ENCODE measurements at regions of chr1 and their contacts with region 1.

Region 1: GRCh38 chr1:111605576-111605975 is 14.0 kb upstream of the RAP1A start:
- DNase-seq: no peak
- H3K4me3 ChIP-seq: no peak overlapping the region
- H3K27me3 ChIP-seq: no peaks in the 10 kb centered on the region
- CTCF ChIP-seq: no peak

Region 2: DNA sequence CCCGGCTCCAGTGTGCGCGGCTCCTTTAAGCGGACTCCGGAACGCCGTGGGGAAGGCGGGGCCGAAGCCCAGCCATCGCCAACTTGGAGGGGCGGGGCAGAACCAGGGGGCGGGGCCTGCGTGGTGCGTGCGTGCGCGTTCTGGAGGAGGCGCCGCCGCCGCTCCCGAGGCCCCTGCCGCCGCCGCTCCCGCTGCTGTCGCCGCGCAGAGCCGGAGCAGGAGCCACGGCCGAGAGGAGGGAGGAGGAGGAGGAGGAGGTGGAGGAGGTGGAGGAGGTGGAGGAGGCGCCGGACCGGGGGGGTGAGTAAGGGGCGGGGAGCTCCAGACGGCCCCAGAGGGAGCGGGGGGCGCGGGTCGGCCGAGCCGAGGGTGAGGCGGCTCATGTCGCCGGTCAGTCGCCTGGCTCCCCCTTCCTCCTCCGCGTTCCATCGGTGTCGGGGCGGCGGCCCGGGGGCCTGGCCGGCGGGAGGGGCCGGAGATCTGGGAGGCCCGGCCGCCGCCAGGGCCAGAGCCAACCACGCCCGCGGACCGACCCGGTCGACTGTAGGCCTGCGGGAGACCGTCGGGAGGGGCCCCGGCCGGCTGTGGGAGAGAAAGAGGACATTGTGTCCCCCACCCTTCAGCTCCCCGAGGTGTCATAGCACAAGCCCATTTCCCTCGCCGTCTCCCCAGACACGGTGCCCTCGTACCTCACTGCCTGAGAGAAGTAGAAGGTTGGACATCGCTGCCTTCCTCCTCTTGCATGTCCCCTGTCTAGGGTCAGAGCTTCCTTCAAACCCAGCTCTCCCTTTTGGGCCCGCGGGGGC is 14.3 kb after region 1 on chr1 and contains the start of gene RAP1A:
- CTCF ChIA-PET with region 1: interaction called, 6 read pairs
- POLR2A ChIA-PET with region 1: interaction called, 16 read pairs
- DNase-seq: no peak
- H3K4me3 ChIP-seq: peak within 1 kb of the TSS; percentile 84
- H3K27me3 ChIP-seq: no peaks in the 10 kb centered on the region
- CTCF ChIP-seq: no peak
- polyA plus RNA-seq, gene RAP1A: 20.5 and 50.9 TPM in 2 replicates